ENCODE measurements at regions of chr13 and their contacts with region 1.

Region 1: DNA sequence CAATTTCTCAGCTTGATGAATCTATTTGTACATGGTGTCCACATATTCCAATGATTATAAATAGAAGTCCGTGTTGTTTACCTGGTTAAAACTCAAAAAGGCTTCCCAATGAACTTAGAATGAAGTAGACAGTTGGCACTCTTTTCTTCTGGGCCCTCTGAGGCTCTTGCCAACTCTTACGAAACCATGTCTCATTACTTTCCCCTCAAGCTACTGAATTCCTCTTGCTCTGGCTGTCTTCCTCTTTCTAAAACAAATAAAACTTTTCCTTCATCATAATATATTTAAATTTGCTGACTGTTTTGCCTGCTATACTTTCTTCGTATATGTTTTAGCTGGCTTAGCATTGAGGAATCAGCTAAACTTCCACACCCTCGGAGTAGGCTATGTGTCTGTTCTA is 139.7 kb downstream of the SLITRK6 start:
- DNase-seq: peak; percentile 81
- H3K4me3 Mint-ChIP-seq: peak overlapping the region; percentile 13
- H3K27ac Mint-ChIP-seq: peak overlapping the region; percentile 33
- H3K4me1 Mint-ChIP-seq: peaks cover 15% of the 10 kb centered on the region
- H3K27me3 Mint-ChIP-seq: no peaks in the 10 kb centered on the region
- CTCF ChIP-seq: no peak

Region 2: GRCh38 chr13:85601526-85601925 is 58.0 kb before region 1 on chr13:
- CTCF ChIA-PET with region 1: no interaction called
- POLR2A ChIA-PET with region 1: interaction called, 3 read pairs
- intact Hi-C with region 1: loop called (anchors 1 kb)
- DNase-seq: no peak
- H3K4me3 Mint-ChIP-seq: no peak overlapping the region
- H3K27ac Mint-ChIP-seq: no peak overlapping the region
- H3K4me1 Mint-ChIP-seq: peaks cover 15% of the 10 kb centered on the region
- H3K27me3 Mint-ChIP-seq: no peaks in the 10 kb centered on the region
- CTCF ChIP-seq: no peak

Region 3: DNA sequence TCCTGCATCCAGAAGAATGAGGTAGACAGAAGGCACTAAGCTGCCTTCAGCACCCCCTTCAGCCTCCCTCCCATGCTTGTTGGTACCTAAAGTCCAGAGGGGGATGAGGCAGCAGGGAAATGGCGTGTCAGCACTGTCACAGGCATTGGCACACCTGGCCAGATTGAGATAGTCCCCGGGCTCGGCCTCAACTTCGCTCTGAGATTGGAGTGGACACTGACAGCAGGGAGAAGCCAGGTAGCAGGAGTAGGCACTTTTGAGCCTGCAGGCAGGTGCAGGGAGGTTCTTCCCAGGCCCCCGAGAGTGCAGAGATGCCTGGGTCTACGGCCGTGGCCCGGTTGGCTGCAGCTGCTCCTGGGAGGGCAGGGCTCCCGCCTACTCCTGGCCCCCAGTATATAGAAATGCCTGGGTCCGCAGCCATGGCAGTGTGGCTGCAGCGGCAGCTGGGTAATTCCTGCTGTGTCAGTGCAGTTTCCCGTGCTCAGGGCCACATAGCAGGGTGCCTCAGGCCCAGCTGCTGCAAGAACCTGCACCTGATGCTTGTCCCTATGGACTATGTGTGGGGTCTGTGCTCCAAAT is 20.6 kb before region 1 on chr13:
- CTCF ChIA-PET with region 1: no interaction called
- POLR2A ChIA-PET with region 1: no interaction called
- intact Hi-C with region 1: no loop called
- DNase-seq: no peak
- H3K4me3 Mint-ChIP-seq: no peak overlapping the region
- H3K27ac Mint-ChIP-seq: no peak overlapping the region
- H3K4me1 Mint-ChIP-seq: no peaks in the 10 kb centered on the region
- H3K27me3 Mint-ChIP-seq: no peaks in the 10 kb centered on the region
- CTCF ChIP-seq: no peak